ENCODE measurements at regions of chr10 and their contacts with region 1.

Region 1: GRCh38 chr10:33273295-33274002 is 61.0 kb downstream of the NRP1 start:
- DNase-seq: peak; percentile 98
- H3K4me3 Mint-ChIP-seq: peak overlapping the region; percentile 66
- H3K27ac Mint-ChIP-seq: peak overlapping the region; percentile 94
- H3K4me1 Mint-ChIP-seq: peaks cover 42% of the 10 kb centered on the region
- H3K27me3 Mint-ChIP-seq: no peaks in the 10 kb centered on the region
- CTCF ChIP-seq: no peak

Region 2: GRCh38 chr10:33082373-33082895 is 191.0 kb before region 1 on chr10:
- CTCF ChIA-PET with region 1: no interaction called
- POLR2A ChIA-PET with region 1: no interaction called
- intact Hi-C with region 1: no loop called
- DNase-seq: no peak
- H3K4me3 Mint-ChIP-seq: no peak overlapping the region
- H3K27ac Mint-ChIP-seq: no peak overlapping the region
- H3K4me1 Mint-ChIP-seq: peaks cover 5% of the 10 kb centered on the region
- H3K27me3 Mint-ChIP-seq: no peaks in the 10 kb centered on the region
- CTCF ChIP-seq: no peak

Region 3: DNA sequence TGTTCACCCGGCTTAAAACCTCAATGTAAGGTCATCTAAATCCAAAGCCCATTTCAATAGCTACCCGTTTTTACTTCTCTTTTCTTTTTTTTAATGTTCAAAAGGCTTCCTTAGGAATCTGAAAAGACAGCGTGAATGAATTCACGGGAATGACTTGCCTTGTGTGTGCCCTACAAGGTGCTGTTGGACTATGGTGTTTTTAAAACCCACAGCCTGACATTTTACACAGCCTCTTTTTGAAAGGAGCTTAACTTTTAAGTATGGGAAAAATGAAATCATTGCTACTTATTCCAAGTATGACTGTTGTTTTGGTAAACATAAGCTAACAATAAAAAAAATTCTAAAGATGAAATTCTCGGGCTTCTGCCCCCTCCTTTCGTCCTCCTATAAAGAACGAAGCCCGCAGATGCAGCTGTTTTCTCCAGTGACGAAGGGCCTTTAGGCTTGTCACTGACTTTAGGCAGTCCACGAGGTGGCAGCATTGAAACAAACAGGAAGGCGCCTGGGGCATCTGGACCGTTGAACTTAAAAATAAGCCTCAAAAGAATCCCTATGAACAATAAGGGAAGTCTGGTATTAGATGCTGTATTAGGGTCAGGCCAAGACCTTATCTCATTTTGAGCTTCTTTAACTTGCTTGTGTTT is 80.3 kb before region 1 on chr10:
- CTCF ChIA-PET with region 1: interaction called, 30 read pairs
- POLR2A ChIA-PET with region 1: interaction called, 16 read pairs
- intact Hi-C with region 1: loop called (anchors 1 kb)
- DNase-seq: peak; percentile 92
- H3K4me3 Mint-ChIP-seq: peak overlapping the region; percentile 47
- H3K27ac Mint-ChIP-seq: peak overlapping the region; percentile 52
- H3K4me1 Mint-ChIP-seq: peaks cover 20% of the 10 kb centered on the region
- H3K27me3 Mint-ChIP-seq: no peaks in the 10 kb centered on the region
- CTCF ChIP-seq: peak; percentile 75

Region 4: GRCh38 chr10:33237736-33238624 is 35.5 kb before region 1 on chr10:
- CTCF ChIA-PET with region 1: no interaction called
- POLR2A ChIA-PET with region 1: interaction called, 4 read pairs
- intact Hi-C with region 1: loop called (anchors 1 kb)
- DNase-seq: peak; percentile 90
- H3K4me3 Mint-ChIP-seq: peak overlapping the region; percentile 6
- H3K27ac Mint-ChIP-seq: peak overlapping the region; percentile 29
- H3K4me1 Mint-ChIP-seq: peaks cover 21% of the 10 kb centered on the region
- H3K27me3 Mint-ChIP-seq: no peaks in the 10 kb centered on the region
- CTCF ChIP-seq: no peak

Region 5: GRCh38 chr10:33291053-33291592 is 17.7 kb after region 1 on chr10:
- CTCF ChIA-PET with region 1: interaction called, 6 read pairs
- POLR2A ChIA-PET with region 1: interaction called, 32 read pairs
- intact Hi-C with region 1: loop called (anchors 1 kb)
- DNase-seq: peak; percentile 85
- H3K4me3 Mint-ChIP-seq: peak overlapping the region; percentile 64
- H3K27ac Mint-ChIP-seq: peak overlapping the region; percentile 98
- H3K4me1 Mint-ChIP-seq: peaks cover 18% of the 10 kb centered on the region
- H3K27me3 Mint-ChIP-seq: no peaks in the 10 kb centered on the region
- CTCF ChIP-seq: no peak

Region 6: GRCh38 chr10:33365871-33366411 is 92.5 kb after region 1 on chr10:
- CTCF ChIA-PET with region 1: no interaction called
- POLR2A ChIA-PET with region 1: no interaction called
- intact Hi-C with region 1: no loop called
- DNase-seq: peak; percentile 61
- H3K4me3 Mint-ChIP-seq: no peak overlapping the region
- H3K27ac Mint-ChIP-seq: peak overlapping the region; percentile 81
- H3K4me1 Mint-ChIP-seq: peaks cover 30% of the 10 kb centered on the region
- H3K27me3 Mint-ChIP-seq: no peaks in the 10 kb centered on the region
- CTCF ChIP-seq: no peak

Measured in MCF 10A (cell line).